Gastrocnemius medialis (tissue), 4 donors: ENCODE measurements at regions of chr2 and their contacts with region 1.

Region 1: DNA sequence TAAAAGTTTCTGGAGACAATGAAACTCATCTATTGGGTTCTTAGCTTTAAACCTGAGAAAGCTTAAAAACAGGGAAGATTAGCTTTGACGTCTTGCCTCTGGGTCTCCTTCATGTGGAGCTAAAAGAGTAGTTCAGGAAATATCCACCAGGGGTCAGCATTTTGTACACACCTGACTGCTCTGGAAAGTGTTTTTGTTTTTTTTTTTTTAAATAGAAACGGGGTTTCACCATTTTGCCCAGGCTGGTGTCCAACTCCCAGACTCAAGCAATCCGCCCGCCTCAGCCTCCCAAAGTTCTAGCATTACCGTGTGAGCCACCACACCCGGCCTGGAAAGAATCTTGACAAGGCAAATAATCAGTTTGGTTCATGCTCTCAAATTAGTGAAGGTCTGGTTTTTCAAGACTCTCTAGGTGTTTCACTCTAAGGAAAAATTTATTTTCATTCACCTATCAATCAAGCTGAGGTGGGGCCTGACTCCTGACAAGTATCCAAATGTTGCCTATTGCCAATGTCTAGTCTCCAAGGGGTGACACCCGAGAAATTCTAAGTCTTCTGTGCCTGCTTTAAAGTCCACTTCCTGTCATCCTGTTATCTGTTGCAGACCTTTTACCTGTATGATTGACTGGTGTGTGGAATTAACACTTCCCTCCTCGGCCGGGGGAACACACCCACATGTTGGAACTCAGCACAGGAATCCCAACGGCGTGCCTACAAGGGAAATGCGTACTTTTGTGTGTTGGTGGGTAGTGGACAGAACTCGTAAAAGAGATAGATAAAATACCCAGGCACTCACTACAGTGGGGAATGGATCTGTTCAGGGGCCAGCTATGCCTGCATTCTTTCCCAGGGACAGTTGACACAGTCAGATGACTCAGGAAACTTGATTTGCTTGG is 11.3 kb downstream of the IL1RN start:
- DNase-seq: no peak
- ATAC-seq: peak; percentile 50 to 68
- H3K4me3 ChIP-seq: no peak overlapping the region
- H3K27ac ChIP-seq: no peak overlapping the region
- H3K4me1 ChIP-seq: no peaks in the 10 kb centered on the region
- H3K27me3 ChIP-seq: no peaks in the 10 kb centered on the region
- CTCF ChIP-seq: peak; percentile 35 to 79 (median 50)
- POLR2A ChIP-seq: no peak

Region 2: GRCh38 chr2:112229348-112229747 is 909.3 kb before region 1 on chr2:
- in situ Hi-C with region 1: no loop called
- intact Hi-C with region 1: no loop called
- DNase-seq: no peak
- ATAC-seq: no peak
- H3K4me3 ChIP-seq: no peak overlapping the region
- H3K27ac ChIP-seq: no peak overlapping the region
- H3K4me1 ChIP-seq: no peaks in the 10 kb centered on the region
- H3K27me3 ChIP-seq: no peaks in the 10 kb centered on the region
- CTCF ChIP-seq: no peak
- POLR2A ChIP-seq: no peak

Region 3: GRCh38 chr2:113124181-113124961 is 14.3 kb before region 1 on chr2:
- in situ Hi-C with region 1: no loop called
- intact Hi-C with region 1: no loop called
- DNase-seq: no peak
- ATAC-seq: peak; percentile 65 to 84
- H3K4me3 ChIP-seq: no peak overlapping the region
- H3K27ac ChIP-seq: no peak overlapping the region
- H3K4me1 ChIP-seq: no peaks in the 10 kb centered on the region
- H3K27me3 ChIP-seq: no peaks in the 10 kb centered on the region
- CTCF ChIP-seq: no peak
- POLR2A ChIP-seq: no peak

Region 4: DNA sequence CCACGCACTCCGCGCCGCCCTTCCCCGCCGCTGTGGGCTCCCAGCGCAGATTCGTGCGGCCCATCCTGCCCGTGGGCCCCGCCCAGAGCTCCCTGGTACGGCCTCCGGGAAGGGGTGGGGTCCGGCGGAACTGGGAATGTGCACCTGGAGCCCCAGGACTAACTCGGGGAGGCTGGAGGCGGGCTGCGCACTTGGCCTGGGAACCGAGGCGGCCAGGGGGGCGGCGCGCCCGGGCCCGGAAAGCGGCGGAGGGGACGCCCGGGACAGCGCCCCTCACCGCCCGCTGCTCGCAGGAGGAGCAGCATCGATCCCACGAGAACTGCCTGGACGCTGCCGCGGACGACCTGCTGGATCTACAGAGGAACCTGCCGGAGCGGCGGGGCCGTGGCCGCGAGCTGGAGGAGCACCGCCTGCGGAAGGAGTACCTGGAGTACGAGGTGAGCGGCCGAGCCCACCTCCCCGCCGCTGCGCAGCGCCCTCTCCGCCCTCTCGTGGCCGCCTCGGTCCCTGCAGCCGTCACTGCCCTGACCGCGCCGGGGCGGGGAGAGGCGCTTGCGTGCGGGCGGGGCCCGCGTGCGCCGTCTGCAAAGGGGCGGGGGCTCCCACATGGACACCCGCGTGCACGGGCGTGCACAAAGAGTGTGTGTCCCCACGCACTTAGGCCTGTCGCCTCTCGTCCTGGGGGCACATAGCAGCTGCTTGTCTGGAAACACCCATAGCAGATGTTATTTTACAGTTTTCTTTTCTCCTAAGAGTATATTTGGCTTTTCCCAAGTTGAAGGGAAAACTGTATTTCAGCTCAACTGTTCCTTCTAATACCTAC is 60.3 kb after region 1 on chr2:
- in situ Hi-C with region 1: no loop called
- intact Hi-C with region 1: loop called (anchors 2 kb)
- DNase-seq: peak; percentile 28 to 51
- ATAC-seq: peak; percentile 90 to 91
- H3K4me3 ChIP-seq: peak overlapping the region; percentile 61 to 98 (median 72)
- H3K27ac ChIP-seq: peak overlapping the region in 3 of 4 donors; percentile 38 to 57 (median 54)
- H3K4me1 ChIP-seq: peaks cover 0 to 3% of the 10 kb centered on the region in 2 donors
- H3K27me3 ChIP-seq: no peaks in the 10 kb centered on the region
- CTCF ChIP-seq: peak; percentile 77 to 95 (median 82)
- POLR2A ChIP-seq: peak; percentile 10 to 16

Region 5: DNA sequence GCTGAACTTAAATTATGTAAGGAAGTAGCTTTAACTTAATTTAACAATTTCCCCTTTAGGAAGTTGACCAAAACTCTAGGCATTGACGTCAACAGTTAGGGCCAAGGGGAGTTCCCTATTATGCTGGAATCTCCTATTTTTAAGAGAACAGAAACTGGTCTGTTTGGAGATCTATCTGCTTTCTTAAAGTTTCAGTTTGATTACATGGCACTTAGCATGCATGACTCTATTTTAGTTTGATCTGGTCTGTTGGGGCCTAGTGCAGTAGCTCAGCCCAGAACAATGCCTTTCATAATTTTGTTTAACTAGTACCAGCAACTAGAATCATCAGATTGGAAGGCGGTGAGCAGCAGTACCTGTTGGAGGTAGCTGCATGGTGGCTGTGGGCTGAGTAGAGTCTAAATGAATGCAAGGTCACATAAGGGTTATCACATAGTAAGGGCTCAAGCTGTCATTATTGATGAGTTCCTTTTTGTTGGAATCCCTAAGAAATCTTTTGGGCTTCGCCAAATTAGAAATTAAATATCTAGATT is 238.3 kb after region 1 on chr2:
- in situ Hi-C with region 1: loop called in 1 of 4 experiments (anchors 5 kb)
- intact Hi-C with region 1: no loop called
- DNase-seq: no peak
- ATAC-seq: no peak
- H3K4me3 ChIP-seq: no peak overlapping the region
- H3K27ac ChIP-seq: no peak overlapping the region
- H3K4me1 ChIP-seq: no peaks in the 10 kb centered on the region
- H3K27me3 ChIP-seq: no peaks in the 10 kb centered on the region
- CTCF ChIP-seq: no peak
- POLR2A ChIP-seq: no peak

Region 6: GRCh38 chr2:113390124-113390849 is 251.6 kb after region 1 on chr2:
- in situ Hi-C with region 1: no loop called
- intact Hi-C with region 1: loop called (anchors 5 kb)
- DNase-seq: peak in 1 of 2 donors; percentile 49
- ATAC-seq: peak; percentile 74 to 90
- H3K4me3 ChIP-seq: peak overlapping the region in 3 of 4 donors; percentile 20 to 44 (median 38)
- H3K27ac ChIP-seq: no peak overlapping the region
- H3K4me1 ChIP-seq: no peaks in the 10 kb centered on the region
- H3K27me3 ChIP-seq: no peaks in the 10 kb centered on the region
- CTCF ChIP-seq: peak; percentile 55 to 93 (median 71)
- POLR2A ChIP-seq: no peak